ENCODE measurements at regions of chr9 and their contacts with region 1.

Region 1: DNA sequence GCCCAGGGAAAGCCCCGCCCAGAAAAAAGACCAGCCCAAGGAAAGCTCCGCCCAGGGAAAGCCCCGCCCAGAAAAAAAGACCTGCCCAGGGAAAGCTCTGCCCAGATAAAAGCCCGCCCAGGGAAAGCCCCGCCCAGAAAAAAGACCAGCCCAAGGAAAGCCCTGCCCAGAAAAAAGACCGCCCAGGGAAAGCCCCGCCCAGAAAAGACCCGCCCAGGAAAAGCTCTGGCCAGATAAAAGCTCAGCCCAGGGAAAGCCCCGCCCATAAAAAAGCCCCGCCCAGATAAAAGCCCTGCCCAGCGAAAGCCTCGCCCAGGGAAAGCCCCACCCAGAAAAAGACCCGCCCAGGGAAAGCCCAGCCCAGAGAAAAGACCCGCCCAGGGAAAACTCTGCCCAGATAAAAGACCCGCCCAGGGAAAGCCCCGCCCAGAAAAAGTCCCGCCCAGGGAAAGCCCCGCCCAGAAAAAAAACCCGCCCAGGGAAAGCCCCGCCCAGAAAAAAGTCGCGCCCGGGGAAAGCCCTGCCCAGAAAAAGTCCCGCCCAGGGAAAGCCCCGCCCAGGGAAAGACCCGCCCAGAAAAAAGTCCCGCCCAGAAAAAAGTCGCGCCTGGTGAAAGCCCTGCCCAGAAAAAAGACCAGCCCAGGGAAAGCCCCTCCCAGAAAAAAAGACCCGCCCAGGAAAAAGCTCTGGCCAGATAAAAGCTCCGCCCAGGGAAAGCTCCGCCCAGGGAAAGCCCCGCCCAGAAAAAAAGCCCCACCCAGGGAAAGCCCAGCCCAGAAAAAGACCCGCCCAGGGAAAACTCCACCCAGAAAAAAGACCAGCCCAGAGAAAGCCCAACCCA is 11.9 kb downstream of the GRIN1 start:
- DNase-seq: peak; percentile 67
- ATAC-seq: peak; percentile 67
- H3K4me3 Mint-ChIP-seq: peak overlapping the region; percentile 52
- H3K27ac Mint-ChIP-seq: peak overlapping the region; percentile 92
- H3K4me1 Mint-ChIP-seq: peaks cover 14% of the 10 kb centered on the region
- H3K27me3 Mint-ChIP-seq: peaks cover 9% of the 10 kb centered on the region
- CTCF ChIP-seq: no peak

Region 2: DNA sequence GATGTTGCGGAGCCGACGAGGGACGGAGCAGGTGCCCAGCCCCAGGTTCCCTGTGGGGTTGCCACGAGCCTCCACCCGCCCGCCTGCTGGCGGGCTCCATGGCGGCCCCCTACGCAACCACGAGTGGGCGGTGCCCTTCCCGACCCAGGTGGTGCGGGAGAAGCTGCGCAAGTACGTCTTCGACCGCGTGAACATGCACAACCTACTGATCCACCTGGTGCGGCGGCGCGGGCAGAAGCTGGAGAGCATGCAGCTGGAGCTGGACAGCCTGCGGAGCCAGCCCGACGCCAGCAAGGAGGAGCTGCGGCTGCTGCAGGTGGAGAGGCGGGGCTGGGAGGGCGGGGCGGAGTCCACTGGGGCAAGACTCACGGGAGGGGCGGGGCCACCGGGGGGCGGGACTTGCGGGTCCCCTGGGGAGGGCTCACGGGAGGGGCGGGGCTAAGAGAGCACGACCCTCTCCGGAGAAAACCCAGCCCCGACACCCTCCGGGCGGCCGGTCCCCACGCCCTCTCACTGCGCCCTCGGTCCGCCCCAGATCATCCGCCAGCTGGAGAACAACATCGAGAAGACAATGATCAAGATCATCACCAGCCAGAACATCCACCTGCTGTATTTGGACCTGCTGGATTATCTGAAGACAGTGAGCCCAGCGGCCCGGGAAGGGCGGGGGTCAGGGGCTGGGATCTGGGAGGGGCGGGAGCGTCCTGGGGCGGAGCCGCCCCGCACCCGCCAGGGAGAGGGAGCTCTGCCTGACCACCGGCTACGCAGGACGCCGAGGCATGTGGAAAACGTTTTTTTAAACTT is 350.8 kb before region 1 on chr9:
- CTCF ChIA-PET with region 1: no interaction called
- POLR2A ChIA-PET with region 1: interaction called, 10 read pairs
- intact Hi-C with region 1: no loop called
- DNase-seq: peak; percentile 66
- ATAC-seq: peak; percentile 85
- H3K4me3 Mint-ChIP-seq: peak overlapping the region; percentile 80
- H3K27ac Mint-ChIP-seq: no peak overlapping the region
- H3K4me1 Mint-ChIP-seq: peaks cover 28% of the 10 kb centered on the region
- H3K27me3 Mint-ChIP-seq: peaks cover 3% of the 10 kb centered on the region
- CTCF ChIP-seq: no peak

Region 3: GRCh38 chr9:137077010-137077747 is 73.7 kb before region 1 on chr9 and contains the start of gene UAP1L1:
- CTCF ChIA-PET with region 1: no interaction called
- POLR2A ChIA-PET with region 1: no interaction called
- intact Hi-C with region 1: loop called (anchors 2 kb)
- DNase-seq: peak; percentile 58
- ATAC-seq: peak; percentile 67
- H3K4me3 Mint-ChIP-seq: peak within 1 kb of the TSS; percentile 78
- H3K27ac Mint-ChIP-seq: peak within 1 kb of the TSS; percentile 35
- H3K4me1 Mint-ChIP-seq: peaks cover 25% of the 10 kb centered on the region
- H3K27me3 Mint-ChIP-seq: no peaks in the 10 kb centered on the region
- CTCF ChIP-seq: no peak
- total RNA-seq, gene UAP1L1: 13.4 and 17.2 TPM in 2 replicates

Region 4: GRCh38 chr9:137086531-137087408 is 64.1 kb before region 1 on chr9 and contains the start of gene MAN1B1:
- CTCF ChIA-PET with region 1: no interaction called
- POLR2A ChIA-PET with region 1: interaction called, 15 read pairs
- intact Hi-C with region 1: loop called (anchors 2 kb)
- DNase-seq: peak; percentile 98
- ATAC-seq: peak; percentile 77
- H3K4me3 Mint-ChIP-seq: peak within 1 kb of the TSS; percentile 93
- H3K27ac Mint-ChIP-seq: peak within 1 kb of the TSS; percentile 97
- H3K4me1 Mint-ChIP-seq: peaks cover 49% of the 10 kb centered on the region
- H3K27me3 Mint-ChIP-seq: no peaks in the 10 kb centered on the region
- CTCF ChIP-seq: no peak
- total RNA-seq, gene MAN1B1: 33.6 and 37.7 TPM in 2 replicates

Region 5: GRCh38 chr9:137123468-137123837 is 27.4 kb before region 1 on chr9:
- CTCF ChIA-PET with region 1: no interaction called
- POLR2A ChIA-PET with region 1: interaction called, 76 read pairs
- intact Hi-C with region 1: no loop called
- DNase-seq: no peak
- ATAC-seq: no peak
- H3K4me3 Mint-ChIP-seq: peak overlapping the region; percentile 39
- H3K27ac Mint-ChIP-seq: peak overlapping the region; percentile 88
- H3K4me1 Mint-ChIP-seq: peaks cover 69% of the 10 kb centered on the region
- H3K27me3 Mint-ChIP-seq: no peaks in the 10 kb centered on the region
- CTCF ChIP-seq: no peak

Region 6: GRCh38 chr9:137188490-137189296 is 37.9 kb after region 1 on chr9 and contains the starts of genes ANAPC2 and SSNA1:
- CTCF ChIA-PET with region 1: no interaction called
- POLR2A ChIA-PET with region 1: interaction called, 24 read pairs
- intact Hi-C with region 1: loop called (anchors 1 kb)
- DNase-seq: peak; percentile 99
- ATAC-seq: peak; percentile 79
- H3K4me3 Mint-ChIP-seq: peak within 1 kb of the TSS; percentile 92
- H3K27ac Mint-ChIP-seq: peak within 1 kb of the TSS; percentile 91
- H3K4me1 Mint-ChIP-seq: peaks cover 36% of the 10 kb centered on the region
- H3K27me3 Mint-ChIP-seq: no peaks in the 10 kb centered on the region
- CTCF ChIP-seq: no peak
- total RNA-seq, gene ANAPC2: 75.7 and 93.9 TPM in 2 replicates
- total RNA-seq, gene SSNA1: 71.9 and 76.8 TPM in 2 replicates

Region 7: DNA sequence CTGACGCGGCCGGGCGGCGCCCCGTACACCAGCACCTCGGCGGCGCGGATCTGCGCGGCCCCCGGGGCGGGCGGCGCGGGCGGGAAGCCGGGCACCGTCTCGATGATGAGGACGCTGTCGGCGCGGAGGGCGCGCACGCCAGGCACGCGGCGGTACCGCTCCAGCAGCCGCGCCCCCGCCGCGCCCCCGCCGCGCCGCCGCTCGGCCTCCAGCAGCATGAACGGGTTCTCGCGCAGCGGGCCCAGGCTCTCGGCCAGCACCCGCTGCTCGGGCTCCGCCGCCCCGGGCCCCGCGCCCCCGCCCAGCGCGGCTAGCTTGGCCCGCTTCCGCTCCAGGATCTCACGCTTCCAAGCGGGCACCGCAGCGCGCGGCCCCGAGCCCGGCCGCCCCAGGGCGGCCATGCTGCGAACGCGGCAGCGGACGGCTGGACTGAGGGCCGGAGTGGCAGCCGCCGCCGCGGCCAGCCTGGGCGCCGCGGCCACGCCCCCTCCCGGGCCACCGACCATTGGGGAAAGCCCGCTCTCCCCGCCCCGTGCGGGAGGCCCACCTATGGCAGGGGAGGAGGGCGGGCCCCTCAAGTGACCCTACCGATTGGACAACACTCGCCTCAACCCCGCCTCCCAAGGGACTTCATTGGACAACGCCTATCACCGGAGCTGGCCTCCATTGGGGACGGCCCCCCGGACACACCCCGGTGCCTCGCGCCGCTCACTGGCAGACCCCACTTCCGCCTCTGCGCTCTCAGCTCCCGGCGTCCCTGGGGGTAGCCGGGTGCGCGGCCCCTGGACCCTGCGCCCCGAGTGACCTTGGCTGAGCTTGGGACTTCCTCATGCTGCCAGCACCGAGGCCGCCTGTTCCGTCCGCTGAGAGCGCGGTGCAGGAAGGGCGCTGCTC is 49.7 kb after region 1 on chr9 and contains the start of gene TPRN:
- CTCF ChIA-PET with region 1: interaction called, 3 read pairs
- POLR2A ChIA-PET with region 1: interaction called, 23 read pairs
- intact Hi-C with region 1: loop called (anchors 1 kb)
- DNase-seq: peak; percentile 92
- ATAC-seq: peak; percentile 95
- H3K4me3 Mint-ChIP-seq: peak within 1 kb of the TSS; percentile 83
- H3K27ac Mint-ChIP-seq: peak within 1 kb of the TSS; percentile 79
- H3K4me1 Mint-ChIP-seq: peaks cover 39% of the 10 kb centered on the region
- H3K27me3 Mint-ChIP-seq: no peaks in the 10 kb centered on the region
- CTCF ChIP-seq: no peak
- total RNA-seq, gene TPRN: 9.3 and 11.4 TPM in 2 replicates

Region 8: DNA sequence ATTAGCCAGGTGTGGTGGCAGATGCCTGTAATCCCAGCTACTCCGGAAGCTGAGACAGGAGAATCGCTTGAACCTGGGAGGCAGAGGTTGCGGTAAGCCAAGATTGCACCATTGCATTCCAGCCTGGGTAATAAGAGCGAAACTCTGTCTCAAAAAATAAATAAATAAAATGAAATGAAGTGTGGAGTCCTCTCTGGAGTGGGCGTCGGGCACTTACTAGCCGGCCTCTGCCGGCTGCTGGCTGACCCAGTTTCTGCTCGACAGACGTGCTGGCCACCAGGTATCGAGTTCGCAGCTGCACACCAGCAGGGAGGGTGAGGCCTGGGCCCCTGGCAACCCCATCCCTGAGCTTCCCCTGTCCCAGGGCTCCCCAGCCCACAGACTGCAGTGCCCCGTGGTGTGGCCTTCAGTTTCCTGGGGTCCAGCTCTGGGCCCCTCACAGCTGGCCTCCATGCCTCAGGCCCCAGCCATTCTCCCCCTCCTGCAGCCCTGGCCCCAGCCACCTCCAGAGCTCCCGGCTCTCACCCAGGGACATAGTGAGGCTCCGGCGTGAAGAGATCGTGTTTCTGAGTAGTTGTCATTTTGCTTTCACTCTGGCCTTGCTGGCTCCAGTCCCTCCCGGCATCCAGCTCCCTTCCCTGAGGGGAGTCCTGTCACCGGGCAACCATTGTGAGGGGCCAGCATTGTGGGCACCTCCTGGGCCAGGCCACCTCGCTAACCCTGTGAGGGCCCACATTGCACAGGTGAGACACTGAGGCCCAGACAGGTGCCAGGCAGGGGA is 96.5 kb after region 1 on chr9:
- CTCF ChIA-PET with region 1: no interaction called
- POLR2A ChIA-PET with region 1: no interaction called
- intact Hi-C with region 1: no loop called
- DNase-seq: no peak
- ATAC-seq: no peak
- H3K4me3 Mint-ChIP-seq: no peak overlapping the region
- H3K27ac Mint-ChIP-seq: no peak overlapping the region
- H3K4me1 Mint-ChIP-seq: peaks cover 15% of the 10 kb centered on the region
- H3K27me3 Mint-ChIP-seq: no peaks in the 10 kb centered on the region
- CTCF ChIP-seq: no peak

Measured in activated B cell treated with CpG ODN at 0.5 μM for 24 hours (primary cell).